Right ventricle myocardium inferior (tissue), 1 donor: ENCODE measurements at regions of chr22 and their contacts with region 1.

Region 1: DNA sequence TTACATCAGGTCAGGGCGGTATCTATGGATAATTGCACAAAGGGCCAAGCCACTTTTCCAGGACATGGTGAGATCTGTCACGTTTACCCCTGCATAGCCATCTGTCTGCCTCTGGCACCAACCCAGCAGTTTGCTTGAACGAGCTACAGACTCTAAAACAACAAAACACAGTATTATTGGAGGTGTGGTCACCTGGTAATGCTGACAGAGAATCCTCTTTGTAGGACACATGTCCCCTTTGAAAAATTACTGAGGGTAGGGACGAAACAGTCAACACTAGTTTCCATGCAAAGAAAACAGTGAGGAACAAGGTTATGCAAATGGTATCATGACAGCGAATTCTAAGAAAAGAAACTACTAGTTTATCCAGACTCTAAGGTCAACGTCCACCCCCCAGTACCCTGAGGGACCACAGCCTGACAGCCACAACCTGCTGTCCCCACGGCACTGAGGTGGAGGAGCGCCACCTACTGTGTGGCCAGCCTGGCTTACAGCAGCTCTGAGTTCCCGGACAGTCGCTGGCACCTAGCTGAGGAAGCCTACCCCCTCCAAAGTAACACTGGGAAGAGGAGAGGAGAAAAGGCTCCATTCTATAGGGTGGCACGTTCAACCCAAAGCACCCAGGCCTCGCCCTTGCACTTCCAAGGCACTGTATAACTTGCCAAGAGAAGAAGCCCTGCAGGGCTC is 117.4 kb upstream of the BID start:
- DNase-seq: peak; percentile 79
- ATAC-seq: peak; percentile 79

Region 2: GRCh38 chr22:17830043-17830961 is 61.3 kb before region 1 on chr22:
- intact Hi-C with region 1: loop called (anchors 1 kb)
- DNase-seq: peak; percentile 89
- ATAC-seq: peak; percentile 79

Region 3: GRCh38 chr22:17851759-17852158 is 39.9 kb before region 1 on chr22:
- intact Hi-C with region 1: loop called (anchors 2 kb)
- DNase-seq: no peak
- ATAC-seq: peak; percentile 81

Region 4: DNA sequence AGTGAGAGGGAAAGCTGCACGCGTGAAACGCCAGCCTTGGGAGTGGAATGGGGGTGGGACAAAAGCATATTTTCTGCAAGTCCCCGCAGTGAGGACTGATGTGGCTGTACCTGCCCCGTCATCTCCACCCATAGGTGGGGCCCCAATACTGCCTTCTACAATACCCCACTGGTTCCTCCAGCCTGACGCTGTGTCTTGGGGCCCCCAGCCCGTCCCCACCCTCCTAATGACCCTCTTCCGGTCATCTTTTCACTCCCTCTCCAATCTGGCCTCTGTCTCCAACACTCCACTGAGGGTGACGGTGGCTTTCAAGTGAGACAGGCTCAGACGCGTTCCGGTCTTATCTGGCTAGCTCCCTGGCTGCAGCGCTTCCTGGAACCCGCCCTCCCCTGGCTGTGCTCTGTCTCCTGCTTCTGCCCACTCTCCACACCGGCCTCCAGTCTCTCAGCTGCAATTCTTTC is 28.6 kb after region 1 on chr22:
- intact Hi-C with region 1: loop called (anchors 2 kb)
- DNase-seq: peak; percentile 76
- ATAC-seq: peak; percentile 82

Region 5: DNA sequence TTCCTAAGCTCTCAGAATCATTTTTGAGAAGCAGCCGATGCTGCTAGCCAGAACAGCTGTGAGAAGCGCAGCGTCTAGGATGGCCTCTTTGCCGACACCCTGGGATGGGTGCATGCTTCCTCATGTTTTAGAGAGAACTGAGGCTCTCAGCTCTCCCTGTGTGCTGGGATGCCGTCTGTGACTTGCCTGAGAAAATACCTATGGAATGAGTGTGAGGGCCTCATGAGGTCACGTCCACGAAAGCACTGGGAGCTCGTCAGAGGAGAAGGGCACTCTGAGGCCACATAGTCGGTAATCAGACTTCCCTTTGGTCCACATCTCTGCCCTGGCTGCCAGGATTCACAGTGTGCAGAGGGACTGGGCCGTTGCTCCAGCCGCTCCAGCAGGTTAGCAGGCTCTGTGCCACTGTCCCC is 78.1 kb after region 1 on chr22:
- intact Hi-C with region 1: no loop called
- DNase-seq: no peak
- ATAC-seq: peak; percentile 85